ENCODE measurements at regions of chr5 and their contacts with region 1.

Region 1: GRCh38 chr5:110335361-110336066 is 391.0 kb downstream of the TMEM232 start:
- DNase-seq: no peak
- H3K4me3 ChIP-seq: no peak overlapping the region
- H3K27ac ChIP-seq: no peak overlapping the region
- H3K4me1 ChIP-seq: no peaks in the 10 kb centered on the region
- H3K27me3 ChIP-seq: no peaks in the 10 kb centered on the region
- CTCF ChIP-seq: no peak

Region 2: GRCh38 chr5:109982966-109983534 is 352.5 kb before region 1 on chr5:
- intact Hi-C with region 1: no loop called
- DNase-seq: no peak
- H3K4me3 ChIP-seq: no peak overlapping the region
- H3K27ac ChIP-seq: no peak overlapping the region
- H3K4me1 ChIP-seq: no peaks in the 10 kb centered on the region
- H3K27me3 ChIP-seq: no peaks in the 10 kb centered on the region
- CTCF ChIP-seq: no peak

Region 3: GRCh38 chr5:110288766-110289511 is 46.6 kb before region 1 on chr5:
- intact Hi-C with region 1: loop called (anchors 2 kb)
- DNase-seq: no peak
- H3K4me3 ChIP-seq: no peak overlapping the region
- H3K27ac ChIP-seq: no peak overlapping the region
- H3K4me1 ChIP-seq: no peaks in the 10 kb centered on the region
- H3K27me3 ChIP-seq: no peaks in the 10 kb centered on the region
- CTCF ChIP-seq: no peak

Region 4: DNA sequence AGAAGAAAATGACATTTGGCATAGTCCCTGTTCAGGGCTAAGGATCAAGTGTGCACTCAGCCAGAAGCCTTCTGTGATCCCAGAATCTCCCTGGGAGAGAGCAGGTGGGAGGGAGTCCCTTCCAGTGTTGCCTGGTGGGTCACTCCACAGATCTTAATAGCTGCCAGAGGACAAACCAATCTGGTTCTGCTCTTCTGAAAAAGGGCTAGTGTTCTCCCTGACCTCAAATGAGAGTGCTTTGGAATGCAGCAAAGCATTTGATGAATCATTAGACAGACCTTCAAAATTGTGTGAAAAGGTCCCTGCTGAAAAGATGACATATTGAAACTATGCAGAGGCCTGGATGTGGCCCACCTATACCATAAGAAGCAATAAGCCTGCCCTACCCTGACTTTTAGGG is 51.3 kb after region 1 on chr5:
- intact Hi-C with region 1: no loop called
- DNase-seq: no peak
- H3K4me3 ChIP-seq: no peak overlapping the region
- H3K27ac ChIP-seq: no peak overlapping the region
- H3K4me1 ChIP-seq: no peaks in the 10 kb centered on the region
- H3K27me3 ChIP-seq: no peaks in the 10 kb centered on the region
- CTCF ChIP-seq: no peak

Region 5: DNA sequence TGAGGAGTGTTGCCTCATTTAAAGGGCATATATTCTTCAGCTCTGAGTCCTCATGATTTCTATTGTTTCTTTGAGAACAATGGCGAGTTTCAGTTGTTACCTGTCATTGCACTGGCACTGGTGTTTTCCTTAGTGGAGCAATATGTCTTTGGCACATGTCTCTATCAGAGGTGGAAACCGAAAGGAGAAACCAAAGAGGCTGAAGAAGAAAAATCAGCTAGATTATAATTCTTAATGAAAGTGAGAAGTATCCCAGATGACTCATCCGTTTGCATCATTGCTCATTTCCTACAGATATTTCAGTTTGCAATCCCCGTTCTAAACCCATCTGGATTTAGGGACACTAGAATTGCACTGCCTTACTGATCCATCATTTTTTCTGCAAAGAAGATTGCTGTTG is 66.4 kb after region 1 on chr5:
- intact Hi-C with region 1: no loop called
- DNase-seq: no peak
- H3K4me3 ChIP-seq: no peak overlapping the region
- H3K27ac ChIP-seq: no peak overlapping the region
- H3K4me1 ChIP-seq: no peaks in the 10 kb centered on the region
- H3K27me3 ChIP-seq: no peaks in the 10 kb centered on the region
- CTCF ChIP-seq: no peak

Measured in colonic mucosa (tissue), 4 donors.